ENCODE measurements at regions of chr5 and their contacts with region 1.

Region 1: GRCh38 chr5:150458819-150459557 is 9.4 kb upstream of the RPS14 start:
- DNase-seq: peak; percentile 93
- ATAC-seq: peak; percentile 87
- H3K4me3 Mint-ChIP-seq: peak overlapping the region; percentile 49
- H3K27ac Mint-ChIP-seq: peak overlapping the region; percentile 52
- H3K4me1 Mint-ChIP-seq: peaks cover 28% of the 10 kb centered on the region
- H3K27me3 Mint-ChIP-seq: no peaks in the 10 kb centered on the region

Region 2: GRCh38 chr5:150523472-150524350 is 64.7 kb after region 1 on chr5:
- CTCF ChIA-PET with region 1: interaction called, 6 read pairs
- POLR2A ChIA-PET with region 1: no interaction called
- intact Hi-C with region 1: loop called (anchors 1 to 2 kb)
- DNase-seq: peak; percentile 15
- ATAC-seq: no peak
- H3K4me3 Mint-ChIP-seq: no peak overlapping the region
- H3K27ac Mint-ChIP-seq: no peak overlapping the region
- H3K4me1 Mint-ChIP-seq: no peaks in the 10 kb centered on the region
- H3K27me3 Mint-ChIP-seq: no peaks in the 10 kb centered on the region

Region 3: DNA sequence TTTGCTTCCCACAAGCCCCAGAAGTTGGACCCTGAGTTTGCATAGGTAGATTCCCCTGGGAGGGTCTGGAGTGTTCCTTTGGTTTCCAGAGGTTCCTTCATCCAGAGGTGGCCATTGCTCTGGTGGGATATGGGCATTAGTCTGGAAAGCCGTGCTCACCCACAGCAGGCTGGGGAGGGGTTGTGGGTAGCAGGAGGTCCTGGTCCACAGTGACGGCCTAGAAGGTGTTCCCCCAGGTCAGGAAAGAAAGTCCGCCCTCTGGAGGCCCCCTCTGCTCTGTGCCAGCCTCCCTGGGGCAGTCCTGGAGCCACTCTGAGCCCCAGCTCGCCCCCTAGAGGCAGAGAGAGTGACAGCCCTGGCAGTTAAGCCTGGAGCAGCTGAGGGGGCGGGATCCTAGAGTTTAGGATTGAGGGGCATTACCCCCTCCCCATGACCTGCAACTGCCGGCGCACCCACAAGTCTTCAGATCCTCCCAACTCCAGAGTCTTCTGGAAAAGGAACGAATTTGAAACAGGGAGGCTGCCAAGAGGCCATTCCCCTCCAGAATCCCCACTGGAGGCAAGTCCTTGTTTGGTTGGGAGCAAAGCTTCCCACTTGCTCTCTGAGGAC is 85.7 kb after region 1 on chr5:
- CTCF ChIA-PET with region 1: interaction called, 10 read pairs
- POLR2A ChIA-PET with region 1: no interaction called
- intact Hi-C with region 1: loop called (anchors 1 to 2 kb)
- DNase-seq: peak; percentile 84
- ATAC-seq: peak; percentile 98
- H3K4me3 Mint-ChIP-seq: no peak overlapping the region
- H3K27ac Mint-ChIP-seq: no peak overlapping the region
- H3K4me1 Mint-ChIP-seq: no peaks in the 10 kb centered on the region
- H3K27me3 Mint-ChIP-seq: no peaks in the 10 kb centered on the region

Region 4: GRCh38 chr5:150624334-150625163 is 165.6 kb after region 1 on chr5:
- CTCF ChIA-PET with region 1: no interaction called
- POLR2A ChIA-PET with region 1: no interaction called
- intact Hi-C with region 1: no loop called
- DNase-seq: peak; percentile 62
- ATAC-seq: peak; percentile 64
- H3K4me3 Mint-ChIP-seq: peak overlapping the region; percentile 74
- H3K27ac Mint-ChIP-seq: no peak overlapping the region
- H3K4me1 Mint-ChIP-seq: peaks cover 20% of the 10 kb centered on the region
- H3K27me3 Mint-ChIP-seq: peaks cover 11% of the 10 kb centered on the region

Region 5: GRCh38 chr5:150656191-150657132 is 197.5 kb after region 1 on chr5:
- CTCF ChIA-PET with region 1: interaction called, 5 read pairs
- POLR2A ChIA-PET with region 1: no interaction called
- intact Hi-C with region 1: loop called (anchors 1 to 5 kb)
- DNase-seq: peak; percentile 82
- ATAC-seq: peak; percentile 82
- H3K4me3 Mint-ChIP-seq: peak overlapping the region; percentile 63
- H3K27ac Mint-ChIP-seq: no peak overlapping the region
- H3K4me1 Mint-ChIP-seq: no peaks in the 10 kb centered on the region
- H3K27me3 Mint-ChIP-seq: no peaks in the 10 kb centered on the region

Region 6: DNA sequence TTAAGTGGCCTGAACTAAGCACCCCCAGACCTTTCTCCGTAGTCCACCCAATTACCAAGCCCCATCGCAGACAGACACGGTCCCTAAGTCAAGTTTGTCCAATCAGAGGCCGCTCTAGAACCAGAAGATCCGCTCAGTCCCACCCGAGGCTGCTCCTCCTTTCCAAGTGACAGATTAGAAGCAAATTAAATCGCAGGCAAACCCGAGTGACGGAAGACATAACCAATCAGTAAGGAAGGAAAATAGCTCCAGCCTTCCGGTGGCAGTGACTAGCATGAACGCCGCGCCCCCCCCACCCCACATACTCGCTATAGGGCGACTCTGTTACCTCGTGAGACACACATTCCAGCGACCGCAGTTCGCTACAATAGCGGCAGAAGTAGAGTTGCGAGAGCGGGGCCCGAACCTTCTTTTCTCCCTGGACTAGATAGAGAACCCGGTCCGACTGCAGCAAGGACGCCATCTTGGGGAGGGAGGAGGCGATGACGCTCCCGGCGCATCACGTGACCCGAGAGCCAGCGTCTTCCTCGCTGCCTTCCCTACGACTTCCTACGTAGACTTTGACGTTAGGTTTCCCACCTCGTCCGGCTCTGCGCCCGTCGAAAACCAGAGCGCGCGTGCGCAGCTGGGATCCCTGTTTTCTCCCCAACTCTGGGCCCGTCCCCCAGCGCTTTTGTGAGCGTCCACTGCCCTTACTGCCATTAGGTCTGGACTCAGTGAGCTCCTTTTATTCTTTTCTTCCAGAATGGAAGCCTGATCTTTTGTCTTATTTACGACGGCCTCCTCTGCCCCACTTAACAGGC is 299.7 kb after region 1 on chr5 and contains the start of gene DCTN4:
- CTCF ChIA-PET with region 1: no interaction called
- POLR2A ChIA-PET with region 1: no interaction called
- intact Hi-C with region 1: loop called in 1 of 2 experiments (anchors 5 kb)
- DNase-seq: peak; percentile 96
- ATAC-seq: peak; percentile 96
- H3K4me3 Mint-ChIP-seq: no peak within 1 kb of the TSS
- H3K27ac Mint-ChIP-seq: no peak within 1 kb of the TSS
- H3K4me1 Mint-ChIP-seq: peaks cover 37% of the 10 kb centered on the region
- H3K27me3 Mint-ChIP-seq: no peaks in the 10 kb centered on the region
- total RNA-seq, gene DCTN4: 31.7 to 49.0 TPM